Activated CD4-positive, alpha-beta T cell treated with anti-CD3 and anti-CD28 coated beads for 36 hours (primary cell): ENCODE measurements at regions of chr10 and their contacts with region 1.

Region 1: GRCh38 chr10:100009793-100010676 is at the start of gene DNMBP:
- DNase-seq: peak; percentile 91
- ATAC-seq: peak; percentile 91
- H3K4me3 Mint-ChIP-seq: peak within 1 kb of the TSS; percentile 74
- H3K27ac Mint-ChIP-seq: peak within 1 kb of the TSS; percentile 79
- H3K4me1 Mint-ChIP-seq: peaks cover 46% of the 10 kb centered on the region
- H3K27me3 Mint-ChIP-seq: peaks cover 8% of the 10 kb centered on the region
- total RNA-seq, gene DNMBP: 1.9 to 2.4 TPM

Region 2: DNA sequence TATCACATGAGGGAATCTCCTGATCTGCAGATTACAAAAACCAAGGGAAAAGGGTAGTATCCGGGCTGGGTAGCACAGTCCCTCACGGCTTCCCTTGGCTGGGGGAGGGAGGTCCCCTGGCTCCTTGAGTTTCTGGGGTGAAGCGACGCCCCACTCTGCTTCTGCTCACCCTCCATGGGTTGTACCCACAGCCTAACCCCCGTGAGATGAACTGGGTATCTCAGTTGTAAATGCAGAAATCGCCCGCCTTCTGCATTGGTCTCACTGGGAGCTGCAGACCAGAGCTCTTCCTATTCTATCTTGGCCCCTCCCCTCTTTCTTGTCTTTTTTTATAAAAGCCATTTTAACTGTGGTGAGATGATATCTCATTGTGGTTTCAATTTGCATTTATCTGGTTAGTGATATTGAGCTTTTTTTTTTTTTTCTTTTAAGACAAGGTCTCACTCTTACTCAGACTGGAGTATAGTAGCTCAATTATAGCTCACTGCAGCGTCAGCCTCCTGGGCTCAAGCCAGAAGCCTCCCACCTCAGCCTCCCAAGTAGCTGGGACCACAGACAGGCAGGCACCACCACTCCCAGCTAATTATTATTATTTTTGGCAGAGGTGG is 139.8 kb before region 1 on chr10:
- CTCF ChIA-PET with region 1: interaction called, 6 read pairs
- POLR2A ChIA-PET with region 1: no interaction called
- intact Hi-C with region 1: loop called in 1 of 2 experiments (anchors 1 kb)
- DNase-seq: peak; percentile 75
- ATAC-seq: peak; percentile 96
- H3K4me3 Mint-ChIP-seq: peak overlapping the region; percentile 13
- H3K27ac Mint-ChIP-seq: no peak overlapping the region
- H3K4me1 Mint-ChIP-seq: peaks cover 19% of the 10 kb centered on the region
- H3K27me3 Mint-ChIP-seq: peaks cover 85% of the 10 kb centered on the region